ENCODE measurements at regions of chr9 and their contacts with region 1.

Region 1: GRCh38 chr9:70073193-70073592 is 29.5 kb downstream of the MAMDC2 start:
- DNase-seq: no peak
- H3K4me3 Mint-ChIP-seq: no peak overlapping the region
- H3K27ac Mint-ChIP-seq: no peak overlapping the region
- H3K4me1 Mint-ChIP-seq: no peaks in the 10 kb centered on the region
- H3K27me3 Mint-ChIP-seq: peaks cover 5% of the 10 kb centered on the region

Region 2: DNA sequence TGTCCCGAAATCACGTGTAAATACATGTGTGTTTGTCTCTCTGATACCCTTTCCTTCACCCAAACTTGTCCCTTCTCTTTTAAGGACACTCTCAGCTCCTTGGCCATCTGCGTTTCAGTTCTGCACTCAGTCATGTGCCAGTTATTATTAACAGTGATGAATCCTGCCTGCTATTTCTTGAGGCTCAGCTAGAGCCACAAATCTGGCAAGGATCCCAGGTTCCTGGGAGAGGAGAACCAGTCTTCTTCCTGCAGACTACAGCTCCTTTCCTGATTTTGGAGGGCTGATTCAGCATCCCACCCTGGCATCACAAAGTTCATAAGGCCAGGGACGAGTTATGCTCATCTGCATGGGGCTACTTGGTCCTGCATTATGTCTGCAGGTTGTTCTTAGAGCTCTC is 24.0 kb before region 1 on chr9:
- CTCF ChIA-PET with region 1: no interaction called
- intact Hi-C with region 1: no loop called
- DNase-seq: no peak
- H3K4me3 Mint-ChIP-seq: no peak overlapping the region
- H3K27ac Mint-ChIP-seq: no peak overlapping the region
- H3K4me1 Mint-ChIP-seq: peaks cover 4% of the 10 kb centered on the region
- H3K27me3 Mint-ChIP-seq: peaks cover 36% of the 10 kb centered on the region

Region 3: DNA sequence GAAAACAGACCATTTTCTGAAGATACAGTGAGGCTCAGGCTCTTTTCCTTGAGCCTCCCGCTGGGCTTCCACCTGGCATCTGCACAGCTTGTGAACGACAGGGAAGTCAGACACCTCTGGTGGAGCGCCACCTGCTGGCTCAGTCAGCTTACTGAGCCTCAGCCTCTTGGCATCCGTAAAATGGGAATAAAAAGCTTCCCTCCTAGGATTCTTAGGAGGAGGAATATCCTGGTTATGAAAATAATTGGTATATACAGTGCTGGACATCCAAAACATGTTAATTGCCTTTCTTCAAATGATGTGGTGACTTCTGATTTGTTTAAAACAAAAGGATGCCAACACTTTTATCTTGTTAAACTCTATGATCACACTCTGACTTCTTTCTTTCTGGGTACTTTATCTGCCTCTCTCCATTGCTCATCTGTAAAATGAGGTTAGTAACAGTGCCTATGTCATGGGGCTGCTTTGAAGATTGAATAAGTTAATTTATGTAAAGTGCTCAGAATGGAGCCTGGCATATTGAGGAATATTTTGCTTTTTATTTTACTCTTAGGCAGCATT is 37.9 kb after region 1 on chr9:
- CTCF ChIA-PET with region 1: interaction called, 12 read pairs
- intact Hi-C with region 1: no loop called
- DNase-seq: peak; percentile 76
- H3K4me3 Mint-ChIP-seq: peak overlapping the region; percentile 22
- H3K27ac Mint-ChIP-seq: no peak overlapping the region
- H3K4me1 Mint-ChIP-seq: peaks cover 9% of the 10 kb centered on the region
- H3K27me3 Mint-ChIP-seq: peaks cover 3% of the 10 kb centered on the region

Region 4: GRCh38 chr9:70160686-70161600 is 87.8 kb after region 1 on chr9:
- CTCF ChIA-PET with region 1: no interaction called
- intact Hi-C with region 1: no loop called
- DNase-seq: no peak
- H3K4me3 Mint-ChIP-seq: no peak overlapping the region
- H3K27ac Mint-ChIP-seq: no peak overlapping the region
- H3K4me1 Mint-ChIP-seq: no peaks in the 10 kb centered on the region
- H3K27me3 Mint-ChIP-seq: no peaks in the 10 kb centered on the region